ENCODE measurements at regions of chr10 and their contacts with region 1.

Region 1: GRCh38 chr10:110502851-110503301 is 5.2 kb downstream of the DUSP5 start:
- DNase-seq: peak; percentile 66
- H3K4me3 Mint-ChIP-seq: peak overlapping the region; percentile 97
- H3K27ac Mint-ChIP-seq: peak overlapping the region; percentile 85
- H3K4me1 Mint-ChIP-seq: peaks cover 74% of the 10 kb centered on the region
- H3K27me3 Mint-ChIP-seq: no peaks in the 10 kb centered on the region

Region 2: GRCh38 chr10:110368002-110368401 is 134.9 kb before region 1 on chr10:
- CTCF ChIA-PET with region 1: no interaction called
- intact Hi-C with region 1: loop called (anchors 1 kb)
- DNase-seq: peak; percentile 40
- H3K4me3 Mint-ChIP-seq: no peak overlapping the region
- H3K27ac Mint-ChIP-seq: peak overlapping the region; percentile 93
- H3K4me1 Mint-ChIP-seq: peaks cover 75% of the 10 kb centered on the region
- H3K27me3 Mint-ChIP-seq: no peaks in the 10 kb centered on the region

Region 3: DNA sequence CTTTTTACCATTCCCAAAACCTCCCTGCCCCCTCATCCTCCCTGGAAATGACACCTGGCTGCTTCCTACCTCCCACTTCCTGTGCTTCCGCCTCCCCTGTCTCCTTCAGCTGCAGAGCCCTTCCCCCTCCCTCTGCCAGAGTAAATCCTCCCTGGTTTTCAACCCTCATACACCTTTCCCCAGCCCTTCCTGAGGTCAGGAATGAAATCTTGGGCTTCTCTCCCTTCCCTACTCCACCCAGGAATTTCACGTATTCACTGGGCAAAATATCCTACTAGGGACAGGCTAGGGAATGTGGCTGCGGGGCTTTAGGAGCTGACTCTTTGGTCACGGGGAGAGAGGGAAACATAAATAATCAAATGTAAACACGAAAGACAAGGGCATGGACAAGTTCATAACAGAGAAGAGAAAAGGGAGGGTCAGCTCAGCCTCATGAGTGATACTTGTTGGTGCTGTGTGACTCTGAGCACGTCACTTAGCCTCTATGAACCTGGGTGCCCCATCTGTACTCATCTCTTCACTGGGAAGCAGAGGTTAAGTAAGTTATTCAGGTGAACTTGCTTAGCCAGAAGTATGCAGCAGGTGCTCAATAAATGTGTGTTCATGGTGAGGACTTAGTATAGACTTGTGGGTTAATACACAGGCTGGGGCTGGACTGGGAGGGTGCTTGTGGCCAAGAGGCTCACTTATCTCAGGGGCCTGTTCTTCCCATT is 15.3 kb before region 1 on chr10:
- CTCF ChIA-PET with region 1: no interaction called
- intact Hi-C with region 1: no loop called
- DNase-seq: no peak
- H3K4me3 Mint-ChIP-seq: no peak overlapping the region
- H3K27ac Mint-ChIP-seq: no peak overlapping the region
- H3K4me1 Mint-ChIP-seq: peaks cover 12% of the 10 kb centered on the region
- H3K27me3 Mint-ChIP-seq: peaks cover 2% of the 10 kb centered on the region

Region 4: DNA sequence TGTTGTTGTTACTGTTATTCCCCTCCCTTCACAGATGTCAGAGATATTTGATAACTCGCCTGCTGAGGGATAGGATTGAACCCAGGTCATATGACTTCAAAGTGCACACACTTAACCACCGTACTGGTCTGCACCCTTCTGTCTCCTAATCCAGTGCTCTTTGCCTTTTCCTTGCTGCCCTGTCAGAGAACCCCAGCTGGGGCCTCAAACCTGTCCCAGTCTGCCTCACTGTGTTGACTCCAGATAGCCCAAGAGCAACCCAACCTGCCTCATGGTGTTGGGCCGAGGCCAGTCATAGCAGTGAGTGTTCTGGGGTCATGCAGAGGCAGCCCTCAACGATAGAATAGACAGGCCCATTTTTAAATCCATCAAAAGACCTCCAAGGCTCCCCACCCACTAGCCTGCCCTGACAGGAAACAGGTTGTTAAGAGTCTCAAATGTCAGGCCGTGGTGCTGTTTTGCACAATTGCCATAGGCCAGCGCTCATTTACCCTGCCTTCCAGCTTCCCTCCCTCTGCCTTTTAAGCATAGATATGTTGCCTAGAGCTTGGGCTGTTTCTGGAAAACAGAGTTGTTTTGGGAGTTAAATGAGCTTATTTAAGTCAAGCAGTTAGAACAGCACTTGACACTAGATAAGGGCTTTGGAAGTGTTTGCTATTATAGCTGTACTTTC is 331.9 kb after region 1 on chr10:
- CTCF ChIA-PET with region 1: no interaction called
- intact Hi-C with region 1: no loop called
- DNase-seq: peak; percentile 58
- H3K4me3 Mint-ChIP-seq: no peak overlapping the region
- H3K27ac Mint-ChIP-seq: peak overlapping the region; percentile 47
- H3K4me1 Mint-ChIP-seq: peaks cover 39% of the 10 kb centered on the region
- H3K27me3 Mint-ChIP-seq: no peaks in the 10 kb centered on the region